ENCODE measurements at regions of chr11 and their contacts with region 1.

Region 1: GRCh38 chr11:110463153-110463552 is 33.4 kb downstream of the FDX1 start:
- DNase-seq: peak in 1 of 2 experiments; percentile 59
- H3K4me3 ChIP-seq: no peak overlapping the region
- H3K4me1 ChIP-seq: no peaks in the 10 kb centered on the region
- H3K27me3 ChIP-seq: no peaks in the 10 kb centered on the region

Region 2: DNA sequence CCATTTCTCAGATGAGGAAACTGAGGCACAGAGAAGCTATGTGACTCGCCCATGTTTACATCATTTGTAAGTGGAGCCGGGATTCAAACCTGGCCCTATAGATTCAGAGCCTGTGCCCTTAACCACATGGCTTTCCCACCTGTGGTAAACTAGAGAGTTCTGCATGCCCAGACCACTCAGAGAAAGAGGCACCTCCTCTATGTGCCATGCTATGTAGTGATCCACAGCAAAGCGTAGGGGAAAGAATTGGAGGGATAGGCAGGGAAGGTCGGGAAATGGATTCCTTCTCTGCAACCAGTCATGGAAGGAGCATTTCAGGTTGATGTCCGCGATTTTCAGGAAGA is 766.9 kb after region 1 on chr11:
- in situ Hi-C with region 1: loop called (anchors 25 kb)
- DNase-seq: no peak
- H3K4me3 ChIP-seq: no peak overlapping the region
- H3K4me1 ChIP-seq: no peaks in the 10 kb centered on the region; the same call in 1 of the 2 replicates
- H3K27me3 ChIP-seq: peaks cover 8% of the 10 kb centered on the region

Region 3: GRCh38 chr11:111446404-111447111 is 983.4 kb after region 1 on chr11:
- in situ Hi-C with region 1: loop called (anchors 10 kb)
- DNase-seq: peak; percentile 77 to 82
- H3K4me3 ChIP-seq: no peak overlapping the region
- H3K4me1 ChIP-seq: no peaks in the 10 kb centered on the region
- H3K27me3 ChIP-seq: peaks cover 16% of the 10 kb centered on the region